Endothelial cell of umbilical vein (primary cell): ENCODE measurements at regions of chr3 and their contacts with region 1.

Region 1: DNA sequence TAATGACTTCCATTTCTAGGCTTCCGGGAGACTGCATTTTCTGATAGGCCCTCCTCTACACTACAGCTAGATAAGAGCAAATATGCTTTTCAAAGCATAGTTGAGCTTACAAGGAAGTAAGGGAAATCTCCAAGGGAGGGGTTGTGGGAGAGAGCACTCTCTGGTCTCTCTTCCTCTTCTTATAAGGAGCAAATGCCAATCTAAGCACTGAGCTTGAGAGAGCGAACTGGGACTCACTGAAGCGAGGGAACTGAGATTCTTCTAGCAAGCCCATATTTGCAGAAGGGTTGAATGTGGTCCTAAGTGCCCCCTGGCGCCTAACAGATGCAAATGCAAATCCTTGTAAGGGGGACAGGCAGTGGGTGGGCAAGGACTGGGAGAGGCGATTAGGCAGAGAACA is 164.8 kb downstream of the ERC2 start:
- DNase-seq: peak; percentile 91
- H3K4me3 ChIP-seq: no peak overlapping the region
- H3K27ac ChIP-seq: no peak overlapping the region
- H3K4me1 ChIP-seq: peaks cover 9% of the 10 kb centered on the region
- H3K27me3 ChIP-seq: no peaks in the 10 kb centered on the region
- CTCF ChIP-seq: peak; percentile 70 to 81
- POLR2A ChIP-seq: no peak

Region 2: DNA sequence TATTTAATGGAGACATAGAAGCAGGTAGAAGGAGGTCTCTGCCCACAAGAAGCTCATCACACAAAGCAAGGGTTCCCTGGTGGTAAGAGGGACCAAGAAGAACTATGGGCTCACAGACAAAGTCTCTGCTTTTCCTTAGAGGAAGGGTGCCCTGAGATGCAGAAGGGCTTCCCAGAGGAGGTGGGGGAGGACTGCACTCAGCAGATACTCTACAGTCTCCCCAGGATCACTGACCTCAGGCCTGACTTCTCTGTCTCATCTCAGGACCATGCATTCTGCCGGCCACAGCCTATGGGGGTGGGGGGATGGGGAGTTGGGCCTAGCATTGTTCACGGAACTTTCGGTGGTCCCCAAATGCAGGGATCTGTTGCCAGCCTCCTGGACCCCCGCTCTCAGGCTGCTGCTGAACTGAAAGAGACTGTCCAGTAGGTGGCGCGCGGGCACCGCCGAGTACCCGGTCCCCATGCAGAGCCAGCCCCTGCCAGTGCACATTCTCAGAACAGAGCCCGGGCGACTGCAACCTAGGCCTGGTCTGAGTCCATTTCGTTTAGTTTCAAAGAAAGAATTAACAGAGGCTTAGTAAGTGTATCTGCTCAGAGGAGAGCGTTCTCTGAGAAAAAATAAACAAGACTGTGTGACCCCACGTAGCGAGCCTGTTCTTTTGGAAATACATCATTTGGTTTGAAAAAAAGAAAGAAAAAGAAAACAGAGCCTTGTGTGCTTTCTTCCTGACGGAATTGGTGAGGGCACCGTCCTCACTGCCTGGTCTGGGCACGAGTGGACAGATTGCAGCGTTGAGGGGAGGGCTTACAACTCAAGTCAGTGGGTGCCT is 1449.7 kb before region 1 on chr3:
- CTCF ChIA-PET with region 1: interaction called, 5 read pairs
- POLR2A ChIA-PET with region 1: no interaction called
- dilution Hi-C with region 1: no loop called
- intact Hi-C with region 1: loop called (anchors 1 kb)
- DNase-seq: peak; percentile 38
- H3K4me3 ChIP-seq: no peak overlapping the region
- H3K27ac ChIP-seq: no peak overlapping the region
- H3K4me1 ChIP-seq: no peaks in the 10 kb centered on the region
- H3K27me3 ChIP-seq: no peaks in the 10 kb centered on the region
- CTCF ChIP-seq: peak; percentile 71 to 87
- POLR2A ChIP-seq: no peak

Region 3: DNA sequence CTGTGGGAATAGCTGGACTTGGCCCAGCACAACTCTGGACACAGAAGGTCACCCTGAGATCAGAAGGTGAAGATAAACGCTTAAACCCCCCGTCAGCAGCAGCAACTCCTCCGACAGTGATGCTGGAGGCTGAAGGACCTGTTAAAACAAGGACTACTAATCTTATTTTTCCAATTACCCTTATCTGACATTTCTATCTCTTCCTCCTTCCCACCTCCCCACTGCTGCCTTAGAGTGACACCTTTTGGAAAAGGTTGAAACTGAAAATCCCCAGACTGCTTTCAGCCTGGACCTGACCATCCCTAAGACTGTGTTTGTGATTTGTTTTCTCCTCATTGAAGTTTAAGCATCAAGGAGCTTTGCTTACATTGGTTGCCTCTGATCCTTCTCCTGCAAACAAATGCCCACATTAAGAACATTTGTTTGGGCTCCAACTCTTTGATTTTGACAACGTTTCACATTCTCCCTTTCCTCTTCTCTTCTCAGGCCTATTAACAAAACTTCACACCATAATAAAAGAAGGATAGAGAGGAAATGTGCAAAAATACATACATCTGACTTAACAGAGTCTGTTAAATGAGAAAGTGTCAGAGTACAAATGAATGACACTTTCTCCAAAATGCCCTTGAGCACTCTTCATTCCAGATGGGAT is 405.8 kb before region 1 on chr3:
- CTCF ChIA-PET with region 1: no interaction called
- POLR2A ChIA-PET with region 1: no interaction called
- dilution Hi-C with region 1: no loop called
- intact Hi-C with region 1: loop called (anchors 2 kb)
- DNase-seq: peak; percentile 34
- H3K4me3 ChIP-seq: no peak overlapping the region
- H3K27ac ChIP-seq: no peak overlapping the region
- H3K4me1 ChIP-seq: peaks cover 12% of the 10 kb centered on the region
- H3K27me3 ChIP-seq: no peaks in the 10 kb centered on the region
- CTCF ChIP-seq: peak; percentile 10 to 13
- POLR2A ChIP-seq: no peak

Region 4: DNA sequence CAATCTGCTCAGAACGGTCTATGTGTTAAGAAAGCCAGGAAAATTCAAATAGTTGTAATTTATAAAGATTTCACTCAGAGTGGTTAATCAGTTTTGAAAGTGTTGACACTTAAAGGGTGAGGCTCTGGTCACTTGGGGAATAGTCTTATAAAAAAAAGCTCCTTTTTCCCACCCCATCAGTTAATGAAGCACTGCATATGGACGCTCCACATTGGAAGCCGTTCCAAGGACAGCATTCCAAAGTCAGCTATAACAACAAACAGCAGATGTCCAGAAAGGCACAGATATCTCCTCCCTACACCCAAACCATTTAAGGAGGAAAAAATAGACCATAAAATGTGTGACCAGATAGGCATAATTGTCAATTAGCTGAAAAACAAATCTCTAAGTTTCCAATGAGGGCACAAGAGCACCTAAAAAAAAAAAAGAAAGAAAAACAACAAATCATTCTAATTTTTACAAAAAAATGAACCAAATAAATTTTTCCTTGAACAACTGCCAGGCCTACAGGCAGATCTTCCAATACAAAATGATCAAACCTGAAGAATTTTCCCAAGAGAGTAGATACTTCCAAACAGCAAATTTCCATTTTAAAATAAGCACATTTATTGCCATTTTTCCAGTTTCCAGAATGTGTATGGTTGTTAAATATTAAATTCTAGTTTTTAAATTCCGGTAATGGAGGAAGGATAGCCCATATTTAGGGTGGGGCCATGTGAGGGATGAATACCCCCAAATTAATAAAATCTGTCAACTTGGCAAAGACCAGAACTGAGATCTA is 33.5 kb before region 1 on chr3:
- CTCF ChIA-PET with region 1: interaction called, 12 read pairs
- POLR2A ChIA-PET with region 1: no interaction called
- dilution Hi-C with region 1: no loop called
- intact Hi-C with region 1: no loop called
- DNase-seq: peak; percentile 84
- H3K4me3 ChIP-seq: no peak overlapping the region
- H3K27ac ChIP-seq: no peak overlapping the region
- H3K4me1 ChIP-seq: no peaks in the 10 kb centered on the region
- H3K27me3 ChIP-seq: no peaks in the 10 kb centered on the region
- CTCF ChIP-seq: no peak
- POLR2A ChIP-seq: no peak

Region 5: DNA sequence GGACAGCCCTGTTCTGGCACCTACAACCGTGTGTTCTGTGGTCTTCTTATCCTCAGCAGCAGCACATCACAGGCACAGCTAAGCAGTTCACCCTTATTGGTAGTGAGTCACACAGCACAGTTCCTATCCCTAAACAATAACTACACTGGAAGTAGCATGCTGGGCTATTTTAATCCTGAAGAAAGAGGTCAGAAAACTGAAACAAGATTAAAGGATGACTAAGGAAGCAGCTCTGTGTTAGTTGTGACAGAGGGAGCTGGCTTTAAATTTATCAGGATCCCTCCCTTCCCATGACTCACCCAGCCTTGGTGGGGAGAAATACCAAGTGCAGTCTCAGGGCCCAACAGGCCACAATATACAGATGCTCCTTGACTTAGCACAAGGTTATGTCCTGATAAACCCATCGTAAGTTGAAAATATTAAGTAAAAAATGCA is 20.5 kb after region 1 on chr3:
- CTCF ChIA-PET with region 1: interaction called, 10 read pairs
- POLR2A ChIA-PET with region 1: no interaction called
- dilution Hi-C with region 1: no loop called
- intact Hi-C with region 1: loop called (anchors 1 kb)
- DNase-seq: peak; percentile 78
- H3K4me3 ChIP-seq: no peak overlapping the region
- H3K27ac ChIP-seq: peak overlapping the region; percentile 20
- H3K4me1 ChIP-seq: peaks cover 17% of the 10 kb centered on the region
- H3K27me3 ChIP-seq: no peaks in the 10 kb centered on the region
- CTCF ChIP-seq: no peak
- POLR2A ChIP-seq: no peak